GM10248 (cell line): ENCODE measurements at regions of chr2 and their contacts with region 1.

Region 1: DNA sequence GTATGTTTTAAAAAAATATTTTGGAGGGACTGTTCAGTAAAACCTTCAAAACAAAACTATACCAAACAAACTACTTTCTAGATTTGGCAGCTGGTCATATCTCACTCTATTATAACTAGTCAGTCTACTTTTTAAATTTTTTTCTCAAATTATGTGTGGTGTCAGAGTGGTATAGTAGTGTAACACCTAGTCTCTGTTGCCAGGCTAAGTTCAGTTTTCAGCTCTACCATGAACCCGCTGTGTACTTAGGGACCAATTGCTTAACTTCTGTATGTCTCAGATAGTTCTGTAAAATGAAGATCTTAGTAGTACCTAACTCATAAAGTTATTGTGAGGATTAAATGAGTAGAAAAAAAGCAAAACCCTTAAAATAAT is 54.3 kb downstream of the GPD2 start:
- DNase-seq: no peak
- CTCF ChIP-seq: no peak

Region 2: GRCh38 chr2:156526950-156527636 is 36.6 kb after region 1 on chr2:
- CTCF ChIA-PET with region 1: no interaction called
- POLR2A ChIA-PET with region 1: interaction called, 15 read pairs
- DNase-seq: peak; percentile 75
- CTCF ChIP-seq: no peak